B cell (primary cell): ENCODE measurements at regions of chr11 and their contacts with region 1.

Region 1: GRCh38 chr11:44519989-44520737 is 45.3 kb upstream of the CD82 start:
- DNase-seq: no peak
- ATAC-seq: no peak
- H3K4me3 ChIP-seq: no peak overlapping the region
- H3K4me3 Mint-ChIP-seq: no peak overlapping the region
- H3K27ac ChIP-seq: no peak overlapping the region
- H3K27ac Mint-ChIP-seq: no peak overlapping the region
- H3K4me1 ChIP-seq: no peaks in the 10 kb centered on the region
- H3K4me1 Mint-ChIP-seq: peaks cover 3% of the 10 kb centered on the region
- H3K27me3 ChIP-seq: peaks cover 0 to 7% (median 3%) of the 10 kb centered on the region in 4 experiments
- H3K27me3 Mint-ChIP-seq: peaks cover 37% of the 10 kb centered on the region
- CTCF ChIP-seq: no peak

Region 2: GRCh38 chr11:44065841-44066731 is 454.1 kb before region 1 on chr11 and contains the start of gene ACCS:
- CTCF ChIA-PET with region 1: no interaction called
- POLR2A ChIA-PET with region 1: no interaction called
- intact Hi-C with region 1: no loop called
- DNase-seq: peak; percentile 94
- ATAC-seq: peak; percentile 96
- H3K4me3 ChIP-seq: peak within 1 kb of the TSS; percentile 32 to 85 (median 81)
- H3K4me3 Mint-ChIP-seq: peak within 1 kb of the TSS; percentile 97
- H3K27ac ChIP-seq: peak within 1 kb of the TSS; percentile 71 to 77
- H3K27ac Mint-ChIP-seq: peak within 1 kb of the TSS; percentile 91
- H3K4me1 ChIP-seq: peaks cover 6 to 18% of the 10 kb centered on the region in 2 donors
- H3K4me1 Mint-ChIP-seq: peaks cover 22% of the 10 kb centered on the region
- H3K27me3 ChIP-seq: no peaks in the 10 kb centered on the region
- H3K27me3 Mint-ChIP-seq: no peaks in the 10 kb centered on the region
- CTCF ChIP-seq: peak; percentile 87
- total RNA-seq, gene ACCS: 56.2 and 59.5 TPM in 2 replicates

Region 3: GRCh38 chr11:44538375-44539054 is 18.4 kb after region 1 on chr11:
- CTCF ChIA-PET with region 1: interaction called, 14 read pairs
- POLR2A ChIA-PET with region 1: no interaction called
- intact Hi-C with region 1: loop called (anchors 1 kb)
- DNase-seq: peak; percentile 81
- ATAC-seq: peak; percentile 93
- H3K4me3 ChIP-seq: no peak overlapping the region
- H3K4me3 Mint-ChIP-seq: no peak overlapping the region
- H3K27ac ChIP-seq: no peak overlapping the region
- H3K27ac Mint-ChIP-seq: no peak overlapping the region
- H3K4me1 ChIP-seq: peaks cover 0 to 6% of the 10 kb centered on the region in 2 donors
- H3K4me1 Mint-ChIP-seq: peaks cover 5% of the 10 kb centered on the region
- H3K27me3 ChIP-seq: peaks cover 0 to 16% (median 2%) of the 10 kb centered on the region in 4 experiments
- H3K27me3 Mint-ChIP-seq: peaks cover 17% of the 10 kb centered on the region
- CTCF ChIP-seq: peak; percentile 100

Region 4: DNA sequence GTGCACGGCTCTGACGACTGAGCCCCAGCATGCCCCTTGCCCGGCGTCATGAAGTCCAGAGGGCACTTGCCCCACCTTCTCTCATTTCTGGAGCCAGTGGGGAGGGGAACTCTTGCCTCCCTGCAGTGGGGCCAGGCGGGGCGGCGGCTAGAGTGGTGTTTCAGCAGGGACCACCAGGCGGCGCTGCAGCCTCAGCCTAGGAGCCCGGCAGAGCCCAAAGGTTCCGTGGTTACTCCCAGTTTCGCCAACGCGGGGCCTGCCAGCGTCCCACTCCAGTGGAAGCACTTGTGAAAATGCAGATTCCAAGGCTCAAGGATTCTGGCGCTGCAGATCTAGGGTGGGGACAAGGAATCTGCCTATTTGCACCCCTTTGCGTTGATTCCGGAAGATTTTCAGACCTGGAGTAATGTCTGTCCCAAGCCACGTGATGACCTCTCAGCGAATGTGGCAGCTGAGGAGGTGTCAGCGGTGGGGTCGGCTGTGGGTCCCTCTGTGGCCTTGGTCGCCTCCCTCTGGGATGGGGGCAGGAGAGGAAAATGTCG is 101.0 kb after region 1 on chr11:
- CTCF ChIA-PET with region 1: interaction called, 54 read pairs
- POLR2A ChIA-PET with region 1: interaction called, 7 read pairs
- intact Hi-C with region 1: loop called (anchors 1 kb)
- DNase-seq: peak; percentile 70
- ATAC-seq: peak; percentile 53
- H3K4me3 ChIP-seq: no peak overlapping the region
- H3K4me3 Mint-ChIP-seq: no peak overlapping the region
- H3K27ac ChIP-seq: no peak overlapping the region
- H3K27ac Mint-ChIP-seq: peak overlapping the region; percentile 50
- H3K4me1 ChIP-seq: peaks cover 20 to 30% of the 10 kb centered on the region in 2 donors
- H3K4me1 Mint-ChIP-seq: peaks cover 73% of the 10 kb centered on the region
- H3K27me3 ChIP-seq: no peaks in the 10 kb centered on the region
- H3K27me3 Mint-ChIP-seq: no peaks in the 10 kb centered on the region
- CTCF ChIP-seq: peak; percentile 81

Region 5: DNA sequence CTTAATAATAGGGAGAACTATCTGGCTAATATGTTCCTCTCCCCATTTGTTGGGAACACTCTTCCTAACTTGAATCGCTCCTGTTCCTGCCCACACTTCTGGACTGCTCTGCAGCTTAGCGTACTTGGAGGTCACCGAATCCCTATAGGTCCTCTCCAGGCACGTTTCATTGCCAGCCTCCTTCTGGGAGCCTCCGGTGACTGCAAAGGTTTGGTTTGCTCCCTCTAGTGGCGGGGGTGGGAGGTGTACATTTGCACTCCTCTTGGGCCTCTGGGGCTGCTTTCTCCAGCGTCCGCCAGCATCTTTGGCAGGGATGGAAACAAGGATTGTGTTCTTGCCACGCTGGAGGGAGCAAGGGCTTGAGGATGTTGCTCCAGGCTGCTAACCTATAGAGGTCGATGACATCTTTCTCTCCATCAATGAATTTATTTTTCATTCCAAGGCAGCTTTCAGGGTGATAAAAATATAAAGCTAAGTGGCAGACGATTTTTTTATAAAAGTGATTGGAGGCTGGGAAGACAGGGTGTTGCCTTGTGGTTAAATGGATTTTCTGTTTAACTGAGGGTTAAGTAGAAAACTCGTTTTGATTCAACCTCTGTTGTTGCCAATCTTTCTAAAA is 255.3 kb after region 1 on chr11:
- CTCF ChIA-PET with region 1: interaction called, 20 read pairs
- POLR2A ChIA-PET with region 1: no interaction called
- intact Hi-C with region 1: no loop called
- DNase-seq: peak; percentile 65
- ATAC-seq: peak; percentile 47
- H3K4me3 ChIP-seq: no peak overlapping the region
- H3K4me3 Mint-ChIP-seq: no peak overlapping the region
- H3K27ac ChIP-seq: no peak overlapping the region
- H3K27ac Mint-ChIP-seq: no peak overlapping the region
- H3K4me1 ChIP-seq: no peaks in the 10 kb centered on the region
- H3K4me1 Mint-ChIP-seq: peaks cover 2% of the 10 kb centered on the region
- H3K27me3 ChIP-seq: peaks cover 0 to 10% (median 0%) of the 10 kb centered on the region in 4 experiments
- H3K27me3 Mint-ChIP-seq: no peaks in the 10 kb centered on the region
- CTCF ChIP-seq: peak; percentile 80